HepG2 (cell line): ENCODE measurements at regions of chr6 and their contacts with region 1.

Region 1: GRCh38 chr6:36985808-36986703 is at the start of gene MTCH1:
- DNase-seq: peak; percentile 81
- ATAC-seq: peak; percentile 92
- H3K4me3 ChIP-seq: peak within 1 kb of the TSS; percentile 71 to 99 (median 91)
- H3K27ac ChIP-seq: peak within 1 kb of the TSS; percentile 74
- H3K4me1 ChIP-seq: peaks cover 30% of the 10 kb centered on the region
- H3K27me3 ChIP-seq: peaks cover 2 to 15% of the 10 kb centered on the region in 2 experiments; a peak in 3 of 5 replicates
- CTCF ChIP-seq: no peak
- EP300 ChIP-seq: peak in 1 of 2 experiments; percentile 35; a peak in 2 of 4 replicates
- POLR2A ChIP-seq: peak; percentile 92 to 94
- RAD21 ChIP-seq: peak; percentile 69; the same call in 1 of the 2 replicates
- total RNA-seq, gene MTCH1: 115 and 144 TPM in 2 replicates

Region 2: DNA sequence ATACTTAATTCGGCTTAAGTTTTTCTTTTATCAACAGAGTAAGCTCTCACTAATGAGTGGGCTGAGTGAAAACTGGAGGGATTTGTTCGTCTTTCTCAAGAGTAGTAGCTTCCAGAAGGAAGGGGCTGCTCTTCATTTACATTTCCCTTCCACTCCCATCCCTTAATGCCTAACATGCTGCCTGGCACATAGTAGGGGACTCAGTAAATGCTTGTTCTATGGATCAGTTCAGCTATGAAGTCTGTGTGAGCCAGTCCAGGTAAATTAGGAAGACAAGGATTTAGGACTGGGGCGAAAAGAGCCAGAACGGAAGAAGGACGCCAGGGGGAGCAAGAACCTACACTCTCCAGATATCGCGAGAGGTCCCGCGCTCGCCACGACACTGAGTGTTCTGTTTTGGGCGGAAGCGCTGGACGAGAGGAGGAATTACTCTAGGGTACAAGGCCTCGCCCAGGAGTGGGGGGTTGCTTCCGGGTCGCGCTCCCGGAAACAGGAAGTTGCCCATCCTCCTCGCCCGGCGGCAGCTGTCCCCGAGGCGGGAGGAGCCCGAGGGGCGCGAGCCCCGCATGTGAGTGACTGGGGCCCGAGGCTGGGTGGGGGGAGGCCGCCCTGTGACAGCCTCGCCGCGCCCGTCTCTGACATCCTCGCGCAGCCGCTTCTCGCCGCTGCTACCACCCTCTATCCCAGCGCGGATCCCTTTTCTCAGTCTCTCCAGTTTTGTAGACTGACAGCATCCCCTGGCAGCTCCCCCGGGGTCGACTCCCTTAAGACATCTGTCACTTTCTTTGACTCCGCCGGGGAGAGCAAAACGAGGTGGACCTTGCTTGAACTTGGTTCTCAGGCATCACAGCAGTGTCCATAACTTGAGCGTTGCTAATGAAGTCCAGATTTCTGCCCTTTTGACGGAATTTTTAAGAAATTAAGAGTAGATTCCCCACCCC is 100.3 kb before region 1 on chr6 and contains the start of gene C6orf89:
- CTCF ChIA-PET with region 1: no interaction called
- POLR2A ChIA-PET with region 1: interaction called, 4 read pairs
- in situ Hi-C with region 1: no loop called
- intact Hi-C with region 1: loop called (anchors 1 kb)
- DNase-seq: peak; percentile 99
- ATAC-seq: peak; percentile 99
- H3K4me3 ChIP-seq: peak within 1 kb of the TSS; percentile 77 to 82 (median 77)
- H3K27ac ChIP-seq: peak within 1 kb of the TSS; percentile 74
- H3K4me1 ChIP-seq: peaks cover 15% of the 10 kb centered on the region
- H3K27me3 ChIP-seq: no peaks in the 10 kb centered on the region; a peak in 2 of 5 replicates
- CTCF ChIP-seq: peak; percentile 98
- EP300 ChIP-seq: peak in 1 of 2 experiments; percentile 55; a peak in 2 of 4 replicates
- POLR2A ChIP-seq: peak; percentile 42 to 63; a peak in 3 of 4 replicates
- RAD21 ChIP-seq: peak; percentile 63; the same call in 1 of the 2 replicates
- total RNA-seq, gene C6orf89: 23.9 and 32.2 TPM in 2 replicates

Region 3: DNA sequence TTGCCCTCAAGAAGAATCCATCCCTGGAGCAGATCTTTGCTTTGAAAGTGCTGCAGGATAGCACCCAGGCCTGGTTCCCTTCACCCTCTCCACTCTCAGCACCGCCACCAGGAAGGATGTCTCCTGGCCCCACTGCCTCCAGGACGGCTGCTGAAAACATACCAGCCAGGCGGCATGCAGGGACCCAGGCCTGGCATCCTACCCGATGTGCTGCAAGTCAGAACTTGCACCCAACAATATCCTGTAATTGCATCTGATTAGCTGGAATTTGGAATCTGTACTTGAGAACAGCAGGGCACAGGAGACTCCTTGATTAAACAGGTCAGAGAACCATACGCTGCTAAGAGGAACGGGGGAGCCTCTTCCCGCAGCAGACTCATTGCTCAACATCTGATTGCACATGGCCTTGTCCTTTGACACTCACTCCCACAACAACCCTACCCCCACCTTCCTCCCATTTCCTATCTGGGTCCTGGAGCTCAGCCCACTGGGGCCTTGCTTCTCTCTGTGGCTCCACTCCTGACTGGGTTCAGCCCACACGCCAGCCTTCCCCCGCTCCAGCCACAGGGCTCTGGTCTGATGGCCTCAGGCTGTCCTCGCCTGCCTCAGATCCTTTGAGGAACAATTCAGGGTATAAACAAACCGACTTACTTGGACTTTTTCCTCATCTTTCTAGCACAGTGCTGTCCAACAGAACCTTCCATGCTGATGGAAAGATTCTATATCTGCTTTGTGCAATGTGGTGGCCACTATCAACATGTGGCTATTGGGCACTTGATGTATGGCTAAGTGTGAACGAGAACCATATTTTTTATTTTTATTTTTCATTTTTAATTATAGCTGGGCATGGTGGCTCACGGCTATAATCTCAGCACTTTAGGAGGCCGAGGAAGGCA is 97.4 kb after region 1 on chr6:
- CTCF ChIA-PET with region 1: no interaction called
- POLR2A ChIA-PET with region 1: no interaction called
- in situ Hi-C with region 1: no loop called
- intact Hi-C with region 1: no loop called
- DNase-seq: peak; percentile 96
- ATAC-seq: peak; percentile 96
- H3K4me3 ChIP-seq: peak overlapping the region; percentile 3 to 57 (median 15); a peak in 2 of 6 replicates
- H3K27ac ChIP-seq: peak overlapping the region; percentile 74
- H3K4me1 ChIP-seq: peaks cover 76% of the 10 kb centered on the region
- H3K27me3 ChIP-seq: no peaks in the 10 kb centered on the region
- CTCF ChIP-seq: peak; percentile 49
- EP300 ChIP-seq: peak; percentile 95 to 98
- POLR2A ChIP-seq: peak; percentile 33 to 50; a peak in 1 of 4 replicates
- RAD21 ChIP-seq: peak; percentile 66